T-cell (primary cell): ENCODE measurements at regions of chr2 and their contacts with region 1.

Region 1: DNA sequence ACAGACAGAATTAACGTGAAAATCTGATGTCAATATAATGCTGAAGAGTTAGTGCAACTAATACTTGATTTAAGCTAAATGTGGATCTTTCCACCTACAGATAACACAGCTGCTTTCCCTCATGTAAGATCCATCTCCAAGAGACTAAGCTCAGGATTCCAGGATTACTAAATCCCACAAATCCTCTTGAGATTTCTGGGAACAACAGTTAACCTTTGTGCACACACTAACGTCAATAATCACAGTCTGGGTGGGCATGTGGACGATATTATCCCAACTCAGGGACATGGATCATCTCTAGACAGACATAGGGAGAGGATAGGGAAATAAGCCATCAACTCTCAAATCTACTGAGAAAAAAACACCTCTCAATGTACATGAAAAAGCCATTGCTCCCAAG is 432.6 kb downstream of the SATB2 start:
- DNase-seq: no peak
- ATAC-seq: no peak
- H3K4me3 ChIP-seq: no peak overlapping the region
- H3K4me3 Mint-ChIP-seq: no peak overlapping the region
- H3K27ac ChIP-seq: no peak overlapping the region
- H3K27ac Mint-ChIP-seq: no peak overlapping the region
- H3K4me1 ChIP-seq: no peaks in the 10 kb centered on the region
- H3K4me1 Mint-ChIP-seq: no peaks in the 10 kb centered on the region
- H3K27me3 ChIP-seq: no peaks in the 10 kb centered on the region
- H3K27me3 Mint-ChIP-seq: no peaks in the 10 kb centered on the region

Region 2: GRCh38 chr2:197345846-197346370 is 1679.2 kb before region 1 on chr2:
- CTCF ChIA-PET with region 1: no interaction called
- POLR2A ChIA-PET with region 1: no interaction called
- DNase-seq: no peak
- ATAC-seq: no peak
- H3K4me3 ChIP-seq: no peak overlapping the region
- H3K4me3 Mint-ChIP-seq: no peak overlapping the region
- H3K27ac ChIP-seq: no peak overlapping the region
- H3K27ac Mint-ChIP-seq: no peak overlapping the region
- H3K4me1 ChIP-seq: no peaks in the 10 kb centered on the region
- H3K4me1 Mint-ChIP-seq: peaks cover 5 to 11% (median 9%) of the 10 kb centered on the region in 3 donors
- H3K27me3 ChIP-seq: no peaks in the 10 kb centered on the region
- H3K27me3 Mint-ChIP-seq: no peaks in the 10 kb centered on the region

Region 3: GRCh38 chr2:198957181-198957580 is 68.0 kb before region 1 on chr2:
- CTCF ChIA-PET with region 1: interaction called in 1 of 2 experiments, 13 read pairs
- POLR2A ChIA-PET with region 1: no interaction called
- DNase-seq: no peak
- ATAC-seq: no peak
- H3K4me3 ChIP-seq: no peak overlapping the region
- H3K4me3 Mint-ChIP-seq: no peak overlapping the region
- H3K27ac ChIP-seq: no peak overlapping the region
- H3K27ac Mint-ChIP-seq: no peak overlapping the region
- H3K4me1 ChIP-seq: no peaks in the 10 kb centered on the region
- H3K4me1 Mint-ChIP-seq: no peaks in the 10 kb centered on the region
- H3K27me3 ChIP-seq: no peaks in the 10 kb centered on the region
- H3K27me3 Mint-ChIP-seq: no peaks in the 10 kb centered on the region

Region 4: GRCh38 chr2:199057936-199058335 is 32.8 kb after region 1 on chr2:
- CTCF ChIA-PET with region 1: no interaction called
- POLR2A ChIA-PET with region 1: no interaction called
- DNase-seq: no peak
- ATAC-seq: no peak
- H3K4me3 ChIP-seq: no peak overlapping the region
- H3K4me3 Mint-ChIP-seq: no peak overlapping the region
- H3K27ac ChIP-seq: no peak overlapping the region
- H3K27ac Mint-ChIP-seq: no peak overlapping the region
- H3K4me1 ChIP-seq: no peaks in the 10 kb centered on the region
- H3K4me1 Mint-ChIP-seq: no peaks in the 10 kb centered on the region
- H3K27me3 ChIP-seq: no peaks in the 10 kb centered on the region
- H3K27me3 Mint-ChIP-seq: no peaks in the 10 kb centered on the region